MCF 10A (cell line): ENCODE measurements at regions of chr5 and their contacts with region 1.

Region 1: GRCh38 chr5:76601470-76601869 is 21.7 kb downstream of the F2RL2 start:
- DNase-seq: peak; percentile 83
- H3K4me3 Mint-ChIP-seq: no peak overlapping the region
- H3K27ac Mint-ChIP-seq: no peak overlapping the region
- H3K4me1 Mint-ChIP-seq: peaks cover 25% of the 10 kb centered on the region
- H3K27me3 Mint-ChIP-seq: no peaks in the 10 kb centered on the region
- CTCF ChIP-seq: peak; percentile 63

Region 2: DNA sequence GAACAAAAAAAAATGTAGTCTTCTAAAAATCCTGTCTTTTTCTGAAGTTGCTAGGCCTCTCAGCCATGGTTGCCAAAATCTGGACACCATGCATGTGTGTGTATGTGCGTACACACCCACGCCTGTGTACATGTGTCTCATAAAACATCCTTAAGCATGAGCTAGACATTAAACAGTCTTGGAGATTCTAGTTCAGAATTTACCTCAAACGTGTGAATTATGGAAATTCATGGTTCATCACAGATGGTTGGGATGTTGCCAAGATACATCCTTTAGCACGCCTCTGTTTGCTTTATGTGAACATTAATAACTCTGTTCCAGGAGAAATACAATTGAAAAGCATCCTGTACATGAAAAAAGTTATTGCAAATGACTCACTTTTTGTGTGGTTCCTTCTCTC is 31.3 kb before region 1 on chr5:
- CTCF ChIA-PET with region 1: no interaction called
- POLR2A ChIA-PET with region 1: no interaction called
- intact Hi-C with region 1: no loop called
- DNase-seq: no peak
- H3K4me3 Mint-ChIP-seq: no peak overlapping the region
- H3K27ac Mint-ChIP-seq: no peak overlapping the region
- H3K4me1 Mint-ChIP-seq: no peaks in the 10 kb centered on the region
- H3K27me3 Mint-ChIP-seq: peaks cover 39% of the 10 kb centered on the region
- CTCF ChIP-seq: no peak

Region 3: DNA sequence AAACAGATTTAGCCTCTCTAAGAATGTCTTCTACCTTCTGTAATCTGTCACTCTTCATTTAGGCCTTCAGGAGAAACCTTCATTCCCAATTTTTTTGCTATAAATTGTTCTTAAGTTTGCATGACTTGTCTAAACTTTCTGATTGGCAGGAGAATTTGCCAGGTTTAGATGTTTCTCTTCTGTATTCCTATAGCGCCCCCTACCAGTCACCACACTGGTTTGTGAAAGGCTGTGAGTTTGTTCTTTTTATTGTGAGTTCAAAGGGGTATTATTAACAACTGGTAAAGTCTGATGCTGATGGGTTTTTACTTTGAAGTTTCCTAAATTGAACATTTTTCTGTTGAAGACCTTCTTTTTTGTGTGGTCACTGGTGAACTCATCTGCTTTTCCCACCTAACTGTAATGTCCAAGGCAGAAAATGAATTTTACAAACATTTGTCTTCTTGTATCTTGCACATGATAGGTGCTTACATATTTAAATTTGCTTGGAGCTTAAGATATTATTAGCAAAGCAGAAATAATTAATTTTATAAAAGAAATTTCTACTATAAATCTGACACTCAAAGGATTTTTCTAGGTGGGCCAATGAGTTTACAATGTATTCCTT is 40.1 kb after region 1 on chr5:
- CTCF ChIA-PET with region 1: interaction called, 5 read pairs
- POLR2A ChIA-PET with region 1: no interaction called
- intact Hi-C with region 1: loop called (anchors 1 kb)
- DNase-seq: peak; percentile 83
- H3K4me3 Mint-ChIP-seq: no peak overlapping the region
- H3K27ac Mint-ChIP-seq: no peak overlapping the region
- H3K4me1 Mint-ChIP-seq: peaks cover 17% of the 10 kb centered on the region
- H3K27me3 Mint-ChIP-seq: no peaks in the 10 kb centered on the region
- CTCF ChIP-seq: peak; percentile 57

Region 4: DNA sequence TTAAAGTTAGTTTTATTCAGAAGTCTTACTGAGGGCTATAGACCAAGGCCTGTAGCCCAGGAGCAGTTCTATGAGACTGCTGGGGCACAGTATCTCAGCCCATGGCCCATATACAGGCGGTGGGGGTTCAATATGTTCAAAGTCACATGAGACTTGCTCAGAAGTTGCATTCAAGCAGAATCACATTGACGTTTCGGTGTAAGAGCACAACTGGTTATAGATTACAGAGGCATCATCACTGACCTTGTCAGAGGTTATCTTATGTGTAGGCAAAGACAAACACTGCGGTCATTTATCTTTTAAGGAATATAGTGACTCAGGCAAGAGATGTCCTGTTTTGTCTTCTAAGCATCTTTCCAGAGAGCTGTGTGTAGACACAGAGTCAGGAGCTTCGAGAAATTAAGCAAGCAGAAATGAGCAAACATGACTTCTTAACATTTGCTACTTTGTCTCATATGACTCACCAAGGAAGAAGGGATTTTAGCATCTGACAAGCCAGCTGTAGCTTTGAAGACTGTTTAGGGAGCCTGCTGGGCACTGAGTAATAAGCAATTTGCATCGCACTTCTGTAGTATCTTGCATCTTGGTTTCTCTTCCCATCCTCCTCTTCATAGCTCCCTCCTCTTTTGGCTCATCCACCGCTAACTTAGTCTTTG is 204.5 kb after region 1 on chr5:
- CTCF ChIA-PET with region 1: no interaction called
- POLR2A ChIA-PET with region 1: no interaction called
- intact Hi-C with region 1: no loop called
- DNase-seq: peak; percentile 90
- H3K4me3 Mint-ChIP-seq: no peak overlapping the region
- H3K27ac Mint-ChIP-seq: peak overlapping the region; percentile 69
- H3K4me1 Mint-ChIP-seq: peaks cover 25% of the 10 kb centered on the region
- H3K27me3 Mint-ChIP-seq: no peaks in the 10 kb centered on the region
- CTCF ChIP-seq: no peak

Region 5: GRCh38 chr5:77015938-77016569 is 414.6 kb after region 1 on chr5:
- CTCF ChIA-PET with region 1: interaction called, 17 read pairs
- POLR2A ChIA-PET with region 1: no interaction called
- intact Hi-C with region 1: loop called (anchors 1 kb)
- DNase-seq: peak; percentile 49
- H3K4me3 Mint-ChIP-seq: no peak overlapping the region
- H3K27ac Mint-ChIP-seq: no peak overlapping the region
- H3K4me1 Mint-ChIP-seq: no peaks in the 10 kb centered on the region
- H3K27me3 Mint-ChIP-seq: no peaks in the 10 kb centered on the region
- CTCF ChIP-seq: peak; percentile 40

Region 6: DNA sequence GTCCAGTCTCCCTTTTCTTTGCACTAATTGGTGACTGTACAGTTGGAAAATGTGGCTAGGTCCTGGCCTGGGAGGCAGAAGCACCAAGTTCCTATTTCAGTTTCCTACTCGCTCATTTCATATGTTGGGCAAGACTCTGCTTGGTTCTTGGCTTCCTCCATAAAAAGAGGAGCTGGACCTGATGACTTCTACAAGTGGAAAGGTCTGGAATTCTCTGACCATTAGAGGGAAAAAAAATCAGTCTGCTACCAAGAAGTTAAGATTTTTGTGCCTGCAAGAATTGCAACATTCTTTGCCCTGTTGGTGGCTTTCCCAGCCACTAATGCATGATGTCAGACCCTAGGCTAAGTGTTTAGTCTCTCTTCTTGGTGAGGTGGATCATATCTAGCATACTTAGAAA is 799.2 kb after region 1 on chr5:
- CTCF ChIA-PET with region 1: no interaction called
- POLR2A ChIA-PET with region 1: no interaction called
- intact Hi-C with region 1: no loop called
- DNase-seq: no peak
- H3K4me3 Mint-ChIP-seq: no peak overlapping the region
- H3K27ac Mint-ChIP-seq: no peak overlapping the region
- H3K4me1 Mint-ChIP-seq: no peaks in the 10 kb centered on the region
- H3K27me3 Mint-ChIP-seq: no peaks in the 10 kb centered on the region
- CTCF ChIP-seq: no peak